A673 (cell line): ENCODE measurements at regions of chr10 and their contacts with region 1.

Region 1: DNA sequence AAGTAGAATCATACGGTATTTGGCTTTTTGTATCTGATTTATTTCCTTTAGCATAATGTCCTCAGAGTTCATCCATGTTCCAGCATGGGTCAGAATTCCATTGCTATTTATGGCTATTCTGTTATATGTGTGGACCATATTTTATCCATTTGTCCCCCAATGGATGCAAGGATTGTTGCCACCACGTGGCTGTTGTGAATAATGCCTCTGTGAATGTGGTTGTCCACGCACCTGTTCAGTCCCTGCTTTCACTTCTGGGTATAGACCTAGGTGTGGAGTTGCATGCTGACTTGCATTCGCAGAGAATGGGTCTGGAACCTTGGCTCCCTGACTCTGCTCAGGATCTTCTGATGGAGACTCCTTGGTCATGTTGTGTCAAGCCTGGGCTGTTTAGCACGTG is 199.9 kb downstream of the CAMK1D start:
- DNase-seq: no peak
- H3K4me3 ChIP-seq: no peak overlapping the region
- H3K27ac ChIP-seq: no peak overlapping the region
- H3K4me1 ChIP-seq: peaks cover 18% of the 10 kb centered on the region
- H3K27me3 ChIP-seq: no peaks in the 10 kb centered on the region
- CTCF ChIP-seq: peak; percentile 24; the same call in 1 of the 2 replicates

Region 2: GRCh38 chr10:12656518-12657142 is 107.3 kb after region 1 on chr10:
- CTCF ChIA-PET with region 1: no interaction called
- POLR2A ChIA-PET with region 1: no interaction called
- intact Hi-C with region 1: loop called (anchors 5 kb)
- DNase-seq: peak; percentile 75
- H3K4me3 ChIP-seq: no peak overlapping the region
- H3K27ac ChIP-seq: no peak overlapping the region
- H3K4me1 ChIP-seq: peaks cover 14% of the 10 kb centered on the region
- H3K27me3 ChIP-seq: no peaks in the 10 kb centered on the region
- CTCF ChIP-seq: peak; percentile 85